ENCODE measurements at regions of chr11 and their contacts with region 1.

Region 1: GRCh38 chr11:66677599-66678375 is at the start of gene RBM4B:
- DNase-seq: peak; percentile 96 to 97
- ATAC-seq: peak; percentile 96
- H3K4me3 ChIP-seq: peak within 1 kb of the TSS; percentile 72
- H3K27ac ChIP-seq: peak within 1 kb of the TSS; percentile 94 to 98
- H3K4me1 ChIP-seq: peaks cover 26% of the 10 kb centered on the region
- CTCF ChIP-seq: no peak
- EP300 ChIP-seq: no peak
- POLR2A ChIP-seq: peak; percentile 66
- RAD21 ChIP-seq: no peak
- polyA plus RNA-seq, gene RBM4B: 30.1 and 32.7 TPM in 2 replicates

Region 2: GRCh38 chr11:66386171-66387069 is 291.4 kb before region 1 on chr11:
- CTCF ChIA-PET with region 1: interaction called, 11 read pairs
- POLR2A ChIA-PET with region 1: interaction called, 8 read pairs
- DNase-seq: peak; percentile 41 to 89
- ATAC-seq: peak; percentile 72 to 84
- H3K4me3 ChIP-seq: peak overlapping the region; percentile 27; the same call in 2 of the 3 replicates
- H3K27ac ChIP-seq: peak overlapping the region in 1 of 2 experiments; percentile 44; a peak in 2 of 6 replicates
- H3K4me1 ChIP-seq: 0 out of 3 replicates have a peak, but pooled peaks cover 3% of the 10 kb centered on the region
- CTCF ChIP-seq: peak; percentile 93
- EP300 ChIP-seq: no peak
- POLR2A ChIP-seq: no peak
- RAD21 ChIP-seq: peak; percentile 65 to 76; a peak in 4 of 5 replicates

Region 3: GRCh38 chr11:66438504-66439466 is 239.0 kb before region 1 on chr11 and contains the start of gene MRPL11:
- CTCF ChIA-PET with region 1: interaction called, 11 read pairs
- POLR2A ChIA-PET with region 1: interaction called, 7 read pairs
- DNase-seq: peak; percentile 94 to 98
- ATAC-seq: peak; percentile 95 to 97
- H3K4me3 ChIP-seq: peak within 1 kb of the TSS; percentile 69
- H3K27ac ChIP-seq: peak within 1 kb of the TSS; percentile 79 to 92
- H3K4me1 ChIP-seq: peaks cover 15% of the 10 kb centered on the region
- CTCF ChIP-seq: peak; percentile 78
- EP300 ChIP-seq: no peak
- POLR2A ChIP-seq: peak; percentile 40; the same call in 1 of the 2 replicates
- RAD21 ChIP-seq: peak; percentile 41 to 54; a peak in 4 of 5 replicates
- polyA plus RNA-seq, gene MRPL11: 62.9 and 70.1 TPM in 2 replicates

Region 4: DNA sequence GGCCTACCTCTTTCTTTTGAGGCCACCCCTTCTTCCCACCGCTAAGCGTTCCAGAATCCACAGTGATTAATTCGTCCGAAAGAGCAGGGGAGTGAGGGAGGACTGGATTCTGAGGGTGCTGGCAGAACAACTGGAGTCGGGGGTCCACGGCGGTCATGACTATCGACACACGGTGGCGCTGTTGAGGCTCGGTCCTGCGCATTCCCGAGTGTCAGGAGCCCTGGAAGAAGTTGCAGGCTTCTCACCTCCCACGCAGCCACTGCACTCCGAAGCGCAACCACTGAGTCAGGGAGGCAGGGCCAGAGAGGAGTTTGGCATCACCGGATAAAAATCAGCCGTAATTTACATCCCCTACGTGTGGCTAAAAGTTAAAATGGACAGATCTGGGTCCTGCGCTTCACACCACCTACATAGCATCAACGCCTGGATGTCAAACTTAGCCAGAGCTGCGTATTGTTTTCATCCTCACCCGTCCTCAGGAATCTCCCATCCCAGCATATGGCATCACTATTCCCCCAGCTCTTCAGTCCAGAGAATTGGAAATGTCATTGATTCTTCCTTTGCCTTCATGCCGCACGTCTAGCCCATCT is 98.7 kb before region 1 on chr11:
- CTCF ChIA-PET with region 1: interaction called, 63 read pairs
- POLR2A ChIA-PET with region 1: interaction called, 3 read pairs
- DNase-seq: peak; percentile 62 to 87
- ATAC-seq: peak; percentile 93 to 95
- H3K4me3 ChIP-seq: no peak overlapping the region
- H3K27ac ChIP-seq: no peak overlapping the region
- H3K4me1 ChIP-seq: peaks cover 9% of the 10 kb centered on the region
- CTCF ChIP-seq: peak; percentile 69
- EP300 ChIP-seq: no peak
- POLR2A ChIP-seq: no peak
- RAD21 ChIP-seq: peak; percentile 67 to 73

Region 5: DNA sequence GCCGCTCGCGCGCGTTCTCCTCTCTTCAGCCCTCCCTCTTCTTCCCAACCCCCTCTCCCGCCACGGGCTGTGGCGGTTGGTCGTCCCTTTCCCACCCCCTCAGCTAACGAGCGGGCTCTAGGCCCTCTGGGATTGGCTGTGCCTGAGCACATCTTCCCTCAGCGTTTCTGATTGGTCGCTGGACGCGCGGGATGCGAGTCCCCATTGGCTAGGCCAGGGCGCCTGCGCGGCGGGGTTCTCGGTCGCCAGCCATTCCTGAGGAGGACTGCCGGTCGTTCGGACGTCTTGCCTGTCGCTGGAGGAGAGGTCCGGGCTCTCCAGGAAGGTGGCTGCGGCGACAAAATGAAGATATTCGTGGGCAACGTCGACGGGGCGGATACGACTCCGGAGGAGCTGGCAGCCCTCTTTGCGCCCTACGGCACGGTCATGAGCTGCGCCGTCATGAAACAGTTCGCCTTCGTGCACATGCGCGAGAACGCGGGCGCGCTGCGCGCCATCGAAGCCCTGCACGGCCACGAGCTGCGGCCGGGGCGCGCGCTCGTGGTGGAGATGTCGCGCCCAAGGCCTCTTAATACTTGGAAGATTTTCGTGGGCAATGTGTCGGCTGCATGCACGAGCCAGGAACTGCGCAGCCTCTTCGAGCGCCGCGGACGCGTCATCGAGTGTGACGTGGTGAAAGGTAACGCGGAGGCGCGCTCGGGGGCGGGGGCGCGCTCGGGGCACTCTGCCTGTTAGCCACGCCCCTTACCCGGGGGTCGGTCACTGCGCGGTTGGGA is 61.2 kb before region 1 on chr11 and contains the start of gene RBM14:
- CTCF ChIA-PET with region 1: interaction called, 8 read pairs
- POLR2A ChIA-PET with region 1: interaction called, 19 read pairs
- DNase-seq: peak; percentile 99 to 100
- ATAC-seq: peak; percentile 96 to 98
- H3K4me3 ChIP-seq: peak within 1 kb of the TSS; percentile 60
- H3K27ac ChIP-seq: peak within 1 kb of the TSS; percentile 95 to 97
- H3K4me1 ChIP-seq: peaks cover 29% of the 10 kb centered on the region
- CTCF ChIP-seq: no peak
- EP300 ChIP-seq: no peak
- POLR2A ChIP-seq: peak; percentile 94
- RAD21 ChIP-seq: no peak
- polyA plus RNA-seq, gene RBM14: 33.0 and 38.0 TPM in 2 replicates

Region 6: GRCh38 chr11:66694732-66695207 is 17.0 kb after region 1 on chr11:
- CTCF ChIA-PET with region 1: interaction called, 17 read pairs
- POLR2A ChIA-PET with region 1: no interaction called
- DNase-seq: peak; percentile 93 to 98
- ATAC-seq: peak; percentile 96 to 99
- H3K4me3 ChIP-seq: no peak overlapping the region
- H3K27ac ChIP-seq: peak overlapping the region; percentile 36 to 69; a peak in 3 of 6 replicates
- H3K4me1 ChIP-seq: peaks cover 5% of the 10 kb centered on the region; the same call in 1 of the 3 replicates
- CTCF ChIP-seq: peak; percentile 99
- EP300 ChIP-seq: no peak
- POLR2A ChIP-seq: no peak
- RAD21 ChIP-seq: peak; percentile 96 to 97